Left ventricle myocardium inferior (tissue), 1 donor: ENCODE measurements at regions of chr12 and their contacts with region 1.

Region 1: GRCh38 chr12:97148941-97149559 is 242.0 kb downstream of the NEDD1 start:
- DNase-seq: peak; percentile 28
- H3K4me3 ChIP-seq: no peak overlapping the region
- H3K27ac ChIP-seq: no peak overlapping the region
- H3K4me1 ChIP-seq: no peaks in the 10 kb centered on the region
- H3K27me3 ChIP-seq: no peaks in the 10 kb centered on the region
- CTCF ChIP-seq: peak; percentile 70

Region 2: GRCh38 chr12:97200181-97200580 is 51.1 kb after region 1 on chr12:
- intact Hi-C with region 1: no loop called
- DNase-seq: no peak
- H3K4me3 ChIP-seq: no peak overlapping the region
- H3K27ac ChIP-seq: no peak overlapping the region
- H3K4me1 ChIP-seq: no peaks in the 10 kb centered on the region
- H3K27me3 ChIP-seq: no peaks in the 10 kb centered on the region
- CTCF ChIP-seq: no peak

Region 3: GRCh38 chr12:97308576-97309198 is 159.6 kb after region 1 on chr12:
- intact Hi-C with region 1: loop called (anchors 5 kb)
- DNase-seq: no peak
- H3K4me3 ChIP-seq: no peak overlapping the region
- H3K27ac ChIP-seq: no peak overlapping the region
- H3K4me1 ChIP-seq: no peaks in the 10 kb centered on the region
- H3K27me3 ChIP-seq: peaks cover 15% of the 10 kb centered on the region
- CTCF ChIP-seq: peak; percentile 77